ENCODE measurements at regions of chr11 and their contacts with region 1.

Region 1: GRCh38 chr11:14499554-14500180 is at the start of gene COPB1:
- DNase-seq: peak; percentile 65 to 92
- H3K4me3 ChIP-seq: peak within 1 kb of the TSS; percentile 70 to 87 (median 77)
- H3K27ac ChIP-seq: peak within 1 kb of the TSS; percentile 67
- H3K4me1 ChIP-seq: no peaks in the 10 kb centered on the region; a peak in 1 of 7 replicates
- H3K27me3 ChIP-seq: no peaks in the 10 kb centered on the region
- CTCF ChIP-seq: no peak
- EP300 ChIP-seq: no peak
- POLR2A ChIP-seq: peak; percentile 90 to 97
- RAD21 ChIP-seq: no peak; a peak in 1 of 4 replicates
- total RNA-seq, gene COPB1: 71.0 and 72.1 TPM in 2 replicates

Region 2: GRCh38 chr11:14269692-14270573 is 229.7 kb before region 1 on chr11:
- CTCF ChIA-PET with region 1: no interaction called
- POLR2A ChIA-PET with region 1: no interaction called
- DNase-seq: no peak
- H3K4me3 ChIP-seq: no peak overlapping the region
- H3K27ac ChIP-seq: no peak overlapping the region
- H3K4me1 ChIP-seq: no peaks in the 10 kb centered on the region; a peak in 1 of 7 replicates
- H3K27me3 ChIP-seq: peaks cover 0 to 2% (median 0%) of the 10 kb centered on the region in 4 experiments; a peak in 1 of 7 replicates
- CTCF ChIP-seq: no peak
- EP300 ChIP-seq: no peak
- POLR2A ChIP-seq: no peak
- RAD21 ChIP-seq: no peak

Region 3: DNA sequence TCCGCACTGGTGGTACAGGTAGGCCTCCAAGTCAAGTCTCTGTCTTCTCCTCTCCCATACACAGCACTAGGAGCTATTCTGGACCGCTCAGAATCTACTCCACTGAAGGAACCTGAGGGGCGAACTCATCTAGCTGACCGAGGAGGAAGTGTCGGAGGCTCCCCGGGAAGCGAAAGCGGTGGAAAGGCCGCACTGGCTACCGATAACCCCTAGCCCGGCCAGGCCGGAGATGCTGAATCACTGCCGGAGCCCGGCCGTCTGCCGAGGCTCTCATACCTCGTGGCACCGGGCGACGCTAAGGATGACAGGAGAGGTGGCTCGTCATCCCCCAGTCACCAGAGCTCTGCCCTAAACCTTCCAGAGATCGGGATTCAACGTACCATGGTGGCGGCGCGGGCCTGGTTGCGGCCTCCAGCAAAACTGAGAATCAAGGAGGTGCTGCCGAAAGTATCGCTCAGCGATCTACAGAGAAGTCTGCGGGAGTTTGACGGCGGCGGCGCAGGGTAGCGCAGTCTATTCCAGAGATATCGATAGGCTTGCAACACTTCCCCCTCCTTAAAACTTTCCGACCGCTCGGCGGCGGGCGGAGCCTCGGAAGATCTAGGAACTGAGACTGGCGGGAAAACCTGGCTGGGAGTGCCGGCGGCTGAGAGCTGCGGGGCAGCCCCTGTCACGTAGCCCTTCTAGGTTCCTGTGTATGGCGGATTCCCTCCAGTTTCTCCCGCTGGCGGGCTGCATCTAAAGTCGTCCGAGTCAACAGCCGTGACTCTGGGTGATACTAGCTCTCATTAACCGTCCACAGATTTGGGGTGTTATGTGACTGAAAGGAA is 20.5 kb after region 1 on chr11 and contains the start of gene PSMA1:
- CTCF ChIA-PET with region 1: interaction called, 3 read pairs
- POLR2A ChIA-PET with region 1: interaction called, 10 read pairs
- DNase-seq: peak; percentile 91
- H3K4me3 ChIP-seq: peak within 1 kb of the TSS; percentile 90 to 100 (median 100)
- H3K27ac ChIP-seq: peak within 1 kb of the TSS; percentile 74
- H3K4me1 ChIP-seq: peaks cover 0 to 2% (median 0%) of the 10 kb centered on the region in 4 experiments; a peak in 2 of 7 replicates
- H3K27me3 ChIP-seq: no peaks in the 10 kb centered on the region
- CTCF ChIP-seq: no peak
- EP300 ChIP-seq: peak in 1 of 2 experiments; percentile 96; a peak in 2 of 3 replicates
- POLR2A ChIP-seq: peak; percentile 46 to 88
- RAD21 ChIP-seq: peak; percentile 18 to 23; a peak in 3 of 4 replicates
- total RNA-seq, gene PSMA1: 148 and 150 TPM in 2 replicates

Measured in H1 (cell line).